Transverse colon (tissue), 4 donors: ENCODE measurements at regions of chr12 and their contacts with region 1.

Region 1: GRCh38 chr12:9331218-9331626 is 123.0 kb upstream of the PZP start:
- DNase-seq: peak; percentile 76
- H3K4me3 ChIP-seq: no peak overlapping the region
- H3K27ac ChIP-seq: no peak overlapping the region
- H3K4me1 ChIP-seq: no peaks in the 10 kb centered on the region
- H3K27me3 ChIP-seq: no peaks in the 10 kb centered on the region
- CTCF ChIP-seq: peak; percentile 84 to 97 (median 96)
- EP300 ChIP-seq: no peak
- POLR2A ChIP-seq: no peak

Region 2: DNA sequence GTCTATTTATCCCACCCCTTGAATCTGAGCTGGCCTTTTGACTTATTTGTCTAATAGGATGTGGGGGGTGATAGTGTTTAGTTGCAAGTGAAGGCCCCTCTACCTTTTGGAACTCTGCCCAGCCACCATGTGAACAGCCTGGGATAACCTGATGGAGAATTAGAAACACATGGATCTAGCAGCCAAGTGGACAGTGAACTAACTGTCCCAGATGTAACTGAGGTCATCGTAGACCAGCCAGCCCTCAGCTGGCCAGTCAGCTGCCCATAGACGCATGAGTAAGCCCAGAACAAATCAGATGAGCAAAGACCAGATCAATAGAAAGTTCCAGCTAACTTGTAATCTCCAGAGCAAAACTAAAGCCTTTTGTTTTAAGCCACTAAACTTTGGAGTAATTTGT is 257.5 kb after region 1 on chr12:
- in situ Hi-C with region 1: loop called in 1 of 4 experiments (anchors 25 kb)
- intact Hi-C with region 1: no loop called
- DNase-seq: no peak
- H3K4me3 ChIP-seq: no peak overlapping the region
- H3K27ac ChIP-seq: no peak overlapping the region
- H3K4me1 ChIP-seq: no peaks in the 10 kb centered on the region
- H3K27me3 ChIP-seq: no peaks in the 10 kb centered on the region
- CTCF ChIP-seq: no peak
- EP300 ChIP-seq: no peak
- POLR2A ChIP-seq: no peak

Region 3: GRCh38 chr12:9615420-9616136 is 284.4 kb after region 1 on chr12:
- in situ Hi-C with region 1: loop called in 1 of 4 experiments (anchors 25 kb)
- intact Hi-C with region 1: no loop called
- DNase-seq: no peak
- H3K4me3 ChIP-seq: no peak overlapping the region
- H3K27ac ChIP-seq: peak overlapping the region in 2 of 4 donors; percentile 16 to 47
- H3K4me1 ChIP-seq: no peaks in the 10 kb centered on the region
- H3K27me3 ChIP-seq: no peaks in the 10 kb centered on the region
- CTCF ChIP-seq: no peak
- EP300 ChIP-seq: no peak
- POLR2A ChIP-seq: no peak

Region 4: GRCh38 chr12:9707864-9708808 is 376.9 kb after region 1 on chr12:
- in situ Hi-C with region 1: loop called in 3 of 4 experiments (anchors 10 to 25 kb)
- intact Hi-C with region 1: no loop called
- DNase-seq: peak; percentile 62
- H3K4me3 ChIP-seq: no peak overlapping the region
- H3K27ac ChIP-seq: peak overlapping the region in 1 of 4 donors; percentile 47
- H3K4me1 ChIP-seq: peaks cover 0 to 9% (median 1%) of the 10 kb centered on the region in 4 donors
- H3K27me3 ChIP-seq: no peaks in the 10 kb centered on the region
- CTCF ChIP-seq: peak; percentile 72 to 84 (median 79)
- EP300 ChIP-seq: no peak
- POLR2A ChIP-seq: no peak

Region 5: DNA sequence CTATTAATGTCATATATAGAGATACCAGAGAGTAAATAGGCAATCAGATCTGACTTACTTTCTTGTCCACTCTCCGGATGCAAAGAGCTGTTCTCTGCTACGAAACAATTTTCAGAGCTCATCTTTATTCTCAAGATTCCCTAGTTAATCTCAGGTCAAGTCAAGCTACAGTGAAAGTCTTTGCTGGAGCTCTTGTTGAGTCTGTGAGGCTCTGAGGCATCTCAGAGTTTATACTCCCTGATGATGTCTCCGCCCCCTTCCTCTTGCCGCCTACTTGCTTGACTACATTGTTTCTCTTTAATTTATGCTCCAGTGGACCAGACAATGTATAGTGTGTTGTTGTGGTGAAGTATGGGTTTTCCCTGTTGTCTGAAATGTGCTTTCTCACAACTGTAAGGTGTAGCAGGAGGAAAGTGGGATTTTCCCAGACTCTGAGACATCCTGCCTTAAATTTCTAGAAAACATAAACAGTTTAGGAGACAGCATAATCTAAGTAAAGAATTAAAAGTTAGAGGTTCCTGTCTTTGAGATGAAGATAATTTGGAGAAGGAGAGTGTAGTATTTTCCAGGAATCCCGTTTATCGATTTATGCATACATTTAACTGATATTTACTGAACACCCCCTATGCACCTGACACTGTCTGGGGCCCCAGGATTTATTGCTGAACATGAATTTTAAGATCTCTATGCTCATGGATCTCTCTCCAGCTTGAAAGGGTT is 429.6 kb after region 1 on chr12 and contains the start of gene CD69:
- in situ Hi-C with region 1: no loop called
- intact Hi-C with region 1: no loop called
- DNase-seq: peak; percentile 71
- H3K4me3 ChIP-seq: peak within 1 kb of the TSS in 2 of 4 donors; percentile 11 to 41
- H3K27ac ChIP-seq: peak within 1 kb of the TSS; percentile 55 to 72 (median 66)
- H3K4me1 ChIP-seq: peaks cover 0 to 4% (median 0%) of the 10 kb centered on the region in 4 donors
- H3K27me3 ChIP-seq: no peaks in the 10 kb centered on the region
- CTCF ChIP-seq: no peak
- EP300 ChIP-seq: no peak
- POLR2A ChIP-seq: peak; percentile 88
- total RNA-seq, gene CD69: 7.8 to 19.2 TPM in 2 of 4 donors, not detected in the others